ENCODE measurements at regions of chr7 and their contacts with region 1.

Region 1: GRCh38 chr7:123692471-123692877 is 36.8 kb downstream of the LMOD2 start:
- DNase-seq: no peak
- ATAC-seq: no peak

Region 2: DNA sequence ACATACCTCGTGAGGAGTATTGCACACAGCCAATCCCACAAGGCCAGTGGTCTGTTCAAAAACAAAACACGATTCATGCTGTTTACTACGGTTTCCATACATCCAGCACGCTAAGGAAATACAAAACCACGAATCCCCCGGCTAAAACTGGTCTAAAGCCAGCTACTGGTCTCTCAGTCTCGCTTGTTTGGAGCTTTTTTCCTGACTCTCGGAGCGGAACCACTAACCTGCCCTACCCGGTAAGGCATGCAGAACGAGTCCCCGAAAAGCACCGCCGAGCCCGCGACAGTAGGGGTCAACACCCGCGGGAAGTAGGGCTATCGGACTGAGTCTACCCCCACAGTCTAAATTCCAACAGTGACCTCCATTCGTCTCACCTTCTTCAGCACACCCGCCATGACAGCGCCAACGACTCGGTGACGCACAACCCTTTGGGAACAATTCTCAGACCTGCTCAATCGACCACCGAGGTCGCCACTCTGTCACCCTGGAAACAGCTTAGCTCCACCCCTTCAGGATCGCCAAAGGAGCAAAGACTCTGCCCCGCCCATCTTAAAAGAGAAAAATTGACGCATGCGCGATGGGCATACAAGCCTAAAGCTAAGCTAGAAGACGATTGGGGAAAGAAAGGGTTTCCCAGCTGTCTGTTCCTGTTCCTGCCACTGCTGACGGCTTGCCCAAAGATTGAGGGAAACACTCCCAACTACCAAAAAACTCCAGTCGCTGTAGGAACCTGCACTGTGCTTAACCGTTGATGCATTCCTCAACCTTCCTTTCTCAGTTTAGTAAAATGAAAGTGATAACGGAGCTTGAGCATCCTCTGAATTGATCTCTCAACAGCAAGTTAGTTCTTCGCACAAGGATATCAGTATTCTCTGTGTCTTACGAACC is 134.8 kb before region 1 on chr7 and contains the start of gene NDUFA5:
- intact Hi-C with region 1: loop called in 1 of 2 experiments (anchors 10 kb)
- DNase-seq: peak; percentile 98
- ATAC-seq: peak; percentile 99
- total RNA-seq, gene NDUFA5: 240 to 283 TPM

Region 3: GRCh38 chr7:123635551-123636359 is 56.7 kb before region 1 on chr7:
- intact Hi-C with region 1: loop called in 1 of 2 experiments (anchors 5 kb)
- DNase-seq: no peak
- ATAC-seq: peak; percentile 63 to 66

Region 4: DNA sequence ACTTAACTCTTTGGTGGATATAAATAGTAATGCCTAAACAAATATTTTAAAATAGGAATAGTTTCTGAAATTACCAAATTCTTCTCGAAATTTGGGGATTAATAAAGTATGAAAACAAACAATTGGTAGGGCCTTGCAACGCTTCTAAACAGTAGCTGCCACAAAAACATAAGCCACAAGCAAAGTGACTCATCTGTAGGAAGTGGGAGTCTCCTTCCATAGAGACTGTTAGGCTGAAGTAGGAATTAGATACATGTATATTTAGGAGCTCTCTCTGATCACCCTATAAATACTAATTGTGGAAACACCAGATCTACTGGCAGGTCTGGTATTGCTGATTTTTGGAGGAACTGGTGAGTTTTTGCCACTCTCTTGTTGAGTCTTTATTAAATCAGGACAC is 42.5 kb before region 1 on chr7:
- intact Hi-C with region 1: no loop called
- DNase-seq: no peak
- ATAC-seq: no peak